ENCODE measurements at regions of chr11 and their contacts with region 1.

Region 1: DNA sequence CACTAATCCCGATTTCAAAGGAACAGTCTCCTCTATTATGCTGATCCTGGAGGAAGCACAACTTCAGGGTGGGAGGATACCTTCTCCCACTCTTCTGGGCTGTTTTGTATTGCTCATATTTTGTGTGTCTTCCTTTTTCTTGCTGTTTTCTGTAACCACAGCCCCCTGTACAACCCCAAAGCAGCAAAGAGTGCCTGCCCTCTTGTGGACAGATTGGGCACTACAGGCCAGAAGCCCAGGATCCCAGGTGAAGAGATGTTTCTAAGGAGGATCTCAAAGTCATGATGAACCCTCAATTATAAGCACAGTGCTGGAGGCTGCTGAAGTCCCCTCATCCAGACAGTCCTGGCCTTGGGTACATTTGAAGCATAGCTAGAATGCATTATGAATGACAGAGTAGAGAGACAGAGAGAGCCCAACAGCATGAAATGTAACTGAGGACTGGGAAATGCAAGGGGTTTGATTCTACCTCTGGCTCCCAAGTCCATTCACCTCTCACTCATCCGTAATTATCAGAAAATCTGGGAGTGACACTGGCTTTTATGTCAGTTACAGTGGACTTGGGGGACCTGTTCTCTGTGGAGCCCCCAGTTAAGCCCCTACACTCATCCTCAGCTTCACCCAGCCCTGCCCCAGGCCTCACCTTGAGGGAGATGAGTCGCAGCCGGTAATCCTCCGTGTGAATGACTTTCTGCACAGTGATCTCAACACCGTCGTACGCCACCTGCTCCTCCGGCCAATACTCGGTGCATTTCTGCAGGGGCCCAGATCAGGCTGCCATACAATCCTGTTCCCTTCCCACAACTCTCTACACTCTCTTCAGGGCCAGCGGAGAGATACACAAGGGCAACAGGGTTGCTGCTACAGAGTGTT is 6.2 kb upstream of the IGSF22 start:
- DNase-seq: peak; percentile 76
- H3K4me3 Mint-ChIP-seq: no peak overlapping the region
- H3K27ac Mint-ChIP-seq: peak overlapping the region; percentile 15
- H3K4me1 Mint-ChIP-seq: peaks cover 3% of the 10 kb centered on the region
- H3K27me3 Mint-ChIP-seq: no peaks in the 10 kb centered on the region

Region 2: DNA sequence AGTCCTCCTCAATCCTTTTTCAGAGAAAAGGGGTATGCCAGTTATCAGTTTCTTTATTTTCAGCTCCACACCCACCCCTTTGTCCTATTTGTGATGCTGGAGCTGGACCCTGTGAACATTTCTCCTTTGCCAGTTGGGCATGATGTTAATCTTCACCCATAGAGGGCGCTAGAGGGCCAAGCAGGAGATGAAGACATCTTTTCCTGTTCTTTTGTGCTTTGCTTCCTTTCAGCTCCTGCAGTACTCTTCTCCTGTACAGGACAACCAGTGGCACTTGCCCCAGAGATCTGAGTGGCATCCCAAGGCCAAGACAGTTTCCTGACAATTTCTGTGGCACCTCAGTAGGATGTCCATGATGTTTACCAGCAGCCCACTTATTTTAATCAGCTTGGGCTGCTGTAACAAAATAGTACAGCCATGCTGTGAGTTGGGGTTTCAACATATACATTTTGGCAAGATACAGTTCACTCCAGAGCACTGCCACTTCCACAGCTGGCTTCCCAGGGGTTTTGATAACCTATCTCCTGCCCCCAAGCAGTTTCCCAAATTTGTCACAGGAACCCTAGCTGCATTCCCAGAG is 488.3 kb before region 1 on chr11:
- CTCF ChIA-PET with region 1: interaction called, 4 read pairs
- POLR2A ChIA-PET with region 1: no interaction called
- intact Hi-C with region 1: loop called (anchors 5 kb)
- DNase-seq: peak; percentile 73
- H3K4me3 Mint-ChIP-seq: no peak overlapping the region
- H3K27ac Mint-ChIP-seq: no peak overlapping the region
- H3K4me1 Mint-ChIP-seq: peaks cover 16% of the 10 kb centered on the region
- H3K27me3 Mint-ChIP-seq: peaks cover 7% of the 10 kb centered on the region

Region 3: DNA sequence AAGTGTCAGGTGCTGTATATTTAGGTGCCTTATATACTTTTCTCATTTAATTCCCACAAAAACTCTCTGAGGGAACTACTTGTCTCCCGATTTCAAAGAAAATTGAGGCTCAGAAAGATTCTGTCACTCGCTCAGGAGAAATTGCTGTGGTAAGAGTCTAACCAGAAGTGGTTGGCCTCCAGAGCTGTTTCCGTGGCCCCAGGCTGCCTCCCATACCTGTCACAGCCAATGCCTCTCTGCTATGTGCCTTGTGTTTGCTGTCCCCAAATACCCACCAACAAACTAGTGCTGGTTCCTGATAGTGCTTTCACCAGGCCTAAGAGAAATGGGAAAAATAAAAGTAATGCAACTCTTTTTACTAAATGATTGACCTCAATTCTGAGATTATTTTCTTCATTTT is 54.6 kb before region 1 on chr11:
- CTCF ChIA-PET with region 1: no interaction called
- POLR2A ChIA-PET with region 1: no interaction called
- intact Hi-C with region 1: no loop called
- DNase-seq: no peak
- H3K4me3 Mint-ChIP-seq: no peak overlapping the region
- H3K27ac Mint-ChIP-seq: no peak overlapping the region
- H3K4me1 Mint-ChIP-seq: peaks cover 9% of the 10 kb centered on the region
- H3K27me3 Mint-ChIP-seq: no peaks in the 10 kb centered on the region

Region 4: DNA sequence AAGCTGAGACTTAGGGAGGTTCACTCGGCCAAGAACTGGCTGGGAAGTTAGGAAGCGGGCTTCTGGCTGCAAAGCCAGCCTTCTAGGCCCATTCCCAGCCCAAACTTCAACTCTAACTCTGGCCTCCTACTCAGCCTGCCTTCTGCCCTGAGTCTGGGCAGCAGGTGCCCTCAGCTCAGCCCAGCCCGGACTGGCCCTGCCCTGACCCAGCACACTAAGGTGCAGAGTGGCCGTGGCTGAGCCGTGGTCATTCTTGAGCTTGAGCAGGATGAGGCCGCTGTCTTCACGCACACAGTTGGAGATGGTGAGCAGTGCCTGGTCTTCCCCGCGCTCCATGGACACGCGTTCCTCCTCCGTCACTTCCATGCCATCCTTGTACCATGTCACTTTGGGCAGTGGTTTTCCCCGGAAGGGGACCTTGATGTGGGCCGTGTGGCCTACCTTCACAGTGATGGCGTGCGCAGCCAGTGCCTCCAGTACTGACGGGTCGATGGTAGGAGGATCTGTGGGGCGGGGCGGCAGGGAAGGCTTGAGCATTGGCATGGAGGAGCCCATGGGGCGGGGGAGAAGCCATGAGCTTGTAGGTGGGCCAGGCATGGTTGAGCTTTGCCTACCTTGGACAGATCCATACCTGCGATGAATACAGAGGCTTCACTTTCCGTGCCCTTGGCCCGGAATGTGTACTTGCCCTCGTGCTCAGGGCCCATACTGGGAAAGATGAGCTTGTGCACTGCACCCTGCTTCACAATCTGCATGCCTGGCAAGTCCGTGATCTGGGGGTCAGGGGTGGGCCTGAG is 18.3 kb before region 1 on chr11:
- CTCF ChIA-PET with region 1: interaction called, 12 read pairs
- POLR2A ChIA-PET with region 1: no interaction called
- intact Hi-C with region 1: no loop called
- DNase-seq: no peak
- H3K4me3 Mint-ChIP-seq: no peak overlapping the region
- H3K27ac Mint-ChIP-seq: no peak overlapping the region
- H3K4me1 Mint-ChIP-seq: peaks cover 2% of the 10 kb centered on the region
- H3K27me3 Mint-ChIP-seq: no peaks in the 10 kb centered on the region

Region 5: GRCh38 chr11:18757811-18758210 is 25.6 kb after region 1 on chr11:
- CTCF ChIA-PET with region 1: interaction called, 62 read pairs
- POLR2A ChIA-PET with region 1: no interaction called
- intact Hi-C with region 1: no loop called
- DNase-seq: no peak
- H3K4me3 Mint-ChIP-seq: no peak overlapping the region
- H3K27ac Mint-ChIP-seq: no peak overlapping the region
- H3K4me1 Mint-ChIP-seq: no peaks in the 10 kb centered on the region
- H3K27me3 Mint-ChIP-seq: no peaks in the 10 kb centered on the region